Heart right ventricle (tissue), 16 donors: ENCODE measurements at regions of chr20 and their contacts with region 1.

Region 1: DNA sequence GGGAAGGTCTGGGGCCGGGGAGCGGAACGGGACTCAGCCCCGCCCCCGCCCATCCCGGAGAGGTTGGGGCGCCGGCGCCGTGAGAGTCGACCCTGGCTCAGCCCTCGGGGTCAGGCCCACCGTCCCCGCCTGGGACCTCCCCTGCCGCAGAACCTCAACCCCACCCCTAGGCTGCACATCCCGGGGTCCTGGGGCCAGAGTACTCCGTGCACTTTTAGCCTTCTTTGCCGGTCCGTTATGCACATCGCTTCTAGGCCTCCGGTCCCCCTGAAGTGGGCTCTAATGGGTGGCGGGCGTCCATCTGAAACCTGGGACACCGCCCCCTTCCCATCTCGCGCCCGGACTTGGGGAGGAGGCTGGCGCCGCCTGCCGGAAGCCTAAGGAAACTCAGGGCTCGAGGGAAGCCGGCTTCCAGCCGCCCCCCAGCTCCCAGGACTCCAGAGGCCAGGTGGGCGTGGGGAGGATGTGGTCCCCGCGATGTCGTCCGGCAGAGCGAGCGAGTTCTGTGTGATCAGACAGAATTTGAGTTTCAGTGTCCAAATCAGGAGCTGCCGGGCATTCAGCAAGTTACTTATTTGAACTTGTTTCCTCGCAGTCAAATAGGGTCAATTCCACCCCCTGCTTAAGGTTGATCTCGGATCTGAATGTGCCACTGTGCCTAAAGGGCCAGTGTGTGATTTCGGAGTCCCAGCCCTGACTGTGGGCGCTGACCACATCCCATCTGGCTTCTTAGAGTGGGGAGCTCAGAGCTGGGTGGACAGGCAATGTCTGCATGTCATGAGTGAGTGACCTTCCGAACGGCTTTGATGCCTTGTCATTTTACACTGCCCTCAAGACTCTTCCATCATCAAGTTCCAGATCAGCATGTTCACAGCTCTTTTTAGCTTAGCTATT is 47.6 kb downstream of the CPXM1 start:
- DNase-seq: no peak
- ATAC-seq: peak in 1 of 8 donors; percentile 3
- H3K4me3 ChIP-seq: peak overlapping the region in 9 of 10 donors; percentile 40 to 57 (median 50)
- H3K27ac ChIP-seq: no peak overlapping the region
- H3K4me1 ChIP-seq: peaks cover 8 to 30% (median 25%) of the 10 kb centered on the region in 9 donors
- H3K27me3 ChIP-seq: peaks cover 5 to 87% (median 57%) of the 10 kb centered on the region in 7 donors
- CTCF ChIP-seq: peak; percentile 29 to 80 (median 62)

Region 2: GRCh38 chr20:2840138-2840966 is 87.5 kb after region 1 on chr20 and contains the starts of genes PCED1A and VPS16:
- intact Hi-C with region 1: loop called in 2 of 10 experiments (anchors 5 to 10 kb)
- DNase-seq: peak; percentile 87 to 91
- ATAC-seq: peak; percentile 98 to 99 (median 99)
- H3K4me3 ChIP-seq: peak within 1 kb of the TSS; percentile 73 to 97 (median 90)
- H3K27ac ChIP-seq: peak within 1 kb of the TSS; percentile 74 to 98 (median 93)
- H3K4me1 ChIP-seq: peaks cover 0 to 23% (median 18%) of the 10 kb centered on the region in 9 donors
- H3K27me3 ChIP-seq: no peaks in the 10 kb centered on the region
- CTCF ChIP-seq: no peak
- total RNA-seq, gene PCED1A: 4.5 to 11.9 (median 6.5) TPM
- total RNA-seq, gene VPS16: 13.0 to 22.8 (median 19.3) TPM

Region 3: DNA sequence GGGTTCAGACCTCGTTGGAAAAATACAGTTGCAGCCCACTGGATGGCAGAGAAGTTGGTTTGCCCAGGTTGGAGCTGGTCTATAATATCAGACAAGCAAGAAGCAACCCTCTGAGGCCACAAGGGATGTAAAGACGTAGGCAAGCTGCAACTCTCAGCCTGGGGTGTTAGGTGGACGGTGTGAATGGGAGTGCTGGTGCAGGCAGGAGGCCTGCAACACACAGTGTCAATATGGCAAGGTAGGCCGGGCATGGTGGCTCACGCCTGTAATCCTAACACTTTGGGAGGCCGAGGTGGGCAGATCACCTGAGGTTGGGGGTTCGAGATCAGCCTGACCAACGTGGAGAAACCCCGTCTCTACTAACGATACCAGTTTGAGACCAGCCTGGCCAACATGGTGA is 98.3 kb after region 1 on chr20:
- intact Hi-C with region 1: loop called in 6 of 10 experiments (anchors 5 to 10 kb)
- DNase-seq: no peak
- ATAC-seq: no peak
- H3K4me3 ChIP-seq: no peak overlapping the region
- H3K27ac ChIP-seq: no peak overlapping the region
- H3K4me1 ChIP-seq: peaks cover 0 to 14% (median 10%) of the 10 kb centered on the region in 9 donors
- H3K27me3 ChIP-seq: no peaks in the 10 kb centered on the region
- CTCF ChIP-seq: no peak

Region 4: DNA sequence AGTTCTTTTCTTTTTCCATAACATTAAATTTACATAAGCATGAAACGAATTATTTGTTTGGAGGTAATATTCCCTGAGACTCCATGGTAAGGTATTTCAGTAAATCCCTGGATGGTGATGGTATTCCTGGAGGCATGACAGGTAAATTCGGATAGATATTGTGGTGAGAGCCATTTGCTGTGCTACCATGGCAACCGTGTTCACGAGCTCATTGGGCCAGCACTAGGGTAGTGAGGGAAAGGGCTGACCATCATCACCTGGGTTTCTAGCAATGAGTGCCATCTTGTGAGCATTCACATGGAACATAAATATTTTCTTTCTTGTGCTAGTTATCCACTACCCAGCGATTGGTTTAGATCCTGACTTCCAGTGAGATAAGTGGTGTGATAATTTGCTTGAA is 238.7 kb after region 1 on chr20:
- intact Hi-C with region 1: loop called in 3 of 10 experiments (anchors 10 kb)
- DNase-seq: no peak
- ATAC-seq: no peak
- H3K4me3 ChIP-seq: no peak overlapping the region
- H3K27ac ChIP-seq: no peak overlapping the region
- H3K4me1 ChIP-seq: peaks cover 0 to 18% (median 0%) of the 10 kb centered on the region in 9 donors
- H3K27me3 ChIP-seq: no peaks in the 10 kb centered on the region
- CTCF ChIP-seq: no peak